ENCODE measurements at regions of chr17 and their contacts with region 1.

Region 1: GRCh38 chr17:42928714-42929496 is 28.3 kb downstream of the G6PC1 start:
- DNase-seq: peak; percentile 26
- H3K4me3 Mint-ChIP-seq: no peak overlapping the region
- H3K27ac Mint-ChIP-seq: peak overlapping the region; percentile 82
- H3K4me1 Mint-ChIP-seq: peaks cover 13% of the 10 kb centered on the region
- H3K27me3 Mint-ChIP-seq: no peaks in the 10 kb centered on the region

Region 2: GRCh38 chr17:42846614-42847282 is 82.2 kb before region 1 on chr17:
- intact Hi-C with region 1: loop called (anchors 2 kb)
- DNase-seq: no peak
- H3K4me3 Mint-ChIP-seq: no peak overlapping the region
- H3K27ac Mint-ChIP-seq: no peak overlapping the region
- H3K4me1 Mint-ChIP-seq: peaks cover 14% of the 10 kb centered on the region
- H3K27me3 Mint-ChIP-seq: no peaks in the 10 kb centered on the region

Region 3: GRCh38 chr17:42953669-42954068 is 24.8 kb after region 1 on chr17:
- intact Hi-C with region 1: no loop called
- DNase-seq: no peak
- H3K4me3 Mint-ChIP-seq: no peak overlapping the region
- H3K27ac Mint-ChIP-seq: no peak overlapping the region
- H3K4me1 Mint-ChIP-seq: no peaks in the 10 kb centered on the region
- H3K27me3 Mint-ChIP-seq: no peaks in the 10 kb centered on the region

Measured in activated T-helper 2 cell treated with anti-CD3 and anti-CD28 coated beads, Interferon-gamma antibody, Interleukin-2, Interleukin-4, amounts not matched to agents 10 μg/mL and 5 μg/mL and 100 μg/mL, durations not matched to agents 14 hours and 24 hours and 36 hours (primary cell).